Esophagus muscularis mucosa (tissue), 4 donors: ENCODE measurements at regions of chr17 and their contacts with region 1.

Region 1: GRCh38 chr17:6473128-6473767 is 29.0 kb downstream of the PIMREG start:
- DNase-seq: no peak
- H3K4me3 ChIP-seq: no peak overlapping the region
- H3K27ac ChIP-seq: peak overlapping the region in 1 of 4 donors; percentile 24
- H3K4me1 ChIP-seq: peaks cover 0 to 40% (median 29%) of the 10 kb centered on the region in 4 donors
- H3K27me3 ChIP-seq: no peaks in the 10 kb centered on the region
- CTCF ChIP-seq: peak; percentile 91 to 99 (median 95)
- EP300 ChIP-seq: no peak
- POLR2A ChIP-seq: no peak

Region 2: GRCh38 chr17:6427279-6427781 is 45.9 kb before region 1 on chr17:
- intact Hi-C with region 1: no loop called
- DNase-seq: no peak
- H3K4me3 ChIP-seq: no peak overlapping the region
- H3K27ac ChIP-seq: no peak overlapping the region
- H3K4me1 ChIP-seq: no peaks in the 10 kb centered on the region
- H3K27me3 ChIP-seq: peaks cover 0 to 37% (median 0%) of the 10 kb centered on the region in 4 donors
- CTCF ChIP-seq: no peak
- EP300 ChIP-seq: no peak
- POLR2A ChIP-seq: no peak

Region 3: DNA sequence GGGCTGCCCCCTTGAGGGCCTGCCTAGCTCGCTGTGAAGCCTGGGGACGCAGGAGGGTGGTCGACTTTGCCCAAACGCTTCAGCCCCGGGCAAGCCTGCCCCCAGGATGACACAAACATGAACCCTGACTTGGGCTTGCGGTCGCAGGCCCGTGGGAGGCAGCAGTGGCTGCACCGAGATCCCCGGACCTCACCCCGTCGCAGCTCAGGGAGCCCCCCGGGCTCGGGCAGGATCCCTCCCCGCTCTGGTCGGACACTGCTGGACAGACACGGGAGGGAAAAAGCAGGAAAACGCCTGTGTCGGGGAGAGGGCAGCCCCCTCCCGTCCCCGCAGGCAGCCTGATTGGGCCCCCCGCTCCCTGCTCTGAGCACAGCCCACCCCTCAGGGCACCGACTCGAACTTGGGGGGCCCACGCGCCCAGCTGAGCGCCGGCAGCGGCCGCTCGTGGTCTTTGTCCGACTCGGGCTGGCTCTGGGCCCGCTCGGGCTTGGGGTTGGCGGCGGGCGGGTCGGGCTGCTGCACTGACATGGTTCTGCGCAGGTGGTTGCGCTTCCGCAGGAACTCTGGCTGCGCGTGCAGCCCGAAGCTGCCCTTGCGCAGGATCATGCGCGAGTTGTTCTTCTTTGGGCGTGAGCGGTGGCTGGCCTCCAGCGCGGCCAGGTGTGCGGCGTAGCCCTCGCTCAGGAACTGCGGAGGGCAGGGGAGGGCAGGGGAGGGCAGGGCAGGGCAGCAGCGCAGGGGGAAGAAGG is 18.1 kb before region 1 on chr17:
- intact Hi-C with region 1: no loop called
- DNase-seq: no peak
- H3K4me3 ChIP-seq: peak overlapping the region in 3 of 4 donors; percentile 24 to 32 (median 30)
- H3K27ac ChIP-seq: no peak overlapping the region
- H3K4me1 ChIP-seq: peaks cover 13 to 41% (median 26%) of the 10 kb centered on the region in 4 donors
- H3K27me3 ChIP-seq: peaks cover 0 to 5% (median 0%) of the 10 kb centered on the region in 4 donors
- CTCF ChIP-seq: no peak
- EP300 ChIP-seq: no peak
- POLR2A ChIP-seq: no peak

Region 4: GRCh38 chr17:6555331-6556120 is 82.3 kb after region 1 on chr17:
- intact Hi-C with region 1: loop called (anchors 5 kb)
- DNase-seq: no peak
- H3K4me3 ChIP-seq: peak overlapping the region; percentile 65 to 87 (median 77)
- H3K27ac ChIP-seq: peak overlapping the region; percentile 88 to 92 (median 90)
- H3K4me1 ChIP-seq: peaks cover 11 to 73% (median 62%) of the 10 kb centered on the region in 4 donors
- H3K27me3 ChIP-seq: peaks cover 0 to 11% (median 0%) of the 10 kb centered on the region in 4 donors
- CTCF ChIP-seq: no peak
- EP300 ChIP-seq: no peak
- POLR2A ChIP-seq: no peak

Region 5: DNA sequence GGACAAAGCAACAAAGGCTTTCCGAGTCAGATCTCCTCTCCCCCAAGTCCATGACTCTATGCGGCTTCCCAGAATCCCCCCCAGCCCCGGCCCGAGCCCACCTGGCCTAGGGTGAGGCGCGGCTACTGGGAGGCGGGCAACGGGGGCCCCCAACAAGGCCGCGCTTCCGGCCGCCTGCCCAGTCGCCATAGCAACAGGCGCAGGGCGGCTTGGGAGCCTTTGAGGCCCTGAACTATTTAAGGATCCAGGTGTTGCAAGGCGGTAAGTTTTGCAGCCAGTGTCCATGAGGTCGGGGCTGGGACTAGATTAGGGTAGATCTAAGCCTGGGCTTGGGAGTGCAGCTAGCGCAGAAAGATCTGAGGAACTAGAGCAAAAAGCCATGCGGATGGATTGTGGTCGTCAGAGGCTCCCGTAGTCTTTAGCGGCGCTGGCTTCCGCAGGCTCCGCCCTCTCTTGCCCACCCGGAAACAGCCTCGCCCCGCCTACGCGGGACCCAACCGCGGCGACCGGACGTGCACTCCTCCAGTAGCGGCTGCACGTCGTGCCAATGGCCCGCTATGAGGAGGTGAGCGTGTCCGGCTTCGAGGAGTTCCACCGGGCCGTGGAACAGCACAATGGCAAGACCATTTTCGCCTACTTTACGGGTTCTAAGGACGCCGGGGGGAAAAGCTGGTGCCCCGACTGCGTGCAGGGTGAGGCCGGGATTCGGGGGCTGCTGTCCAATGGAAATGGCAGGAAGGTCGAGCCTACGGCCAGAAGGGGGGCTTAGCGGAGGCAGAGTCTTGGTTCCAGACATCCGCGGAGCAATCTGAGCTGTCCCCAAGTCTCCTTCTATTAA is 167.5 kb after region 1 on chr17 and contains the starts of genes KIAA0753 and TXNDC17:
- intact Hi-C with region 1: loop called (anchors 5 kb)
- DNase-seq: peak; percentile 98
- H3K4me3 ChIP-seq: peak within 1 kb of the TSS; percentile 83 to 90 (median 86)
- H3K27ac ChIP-seq: peak within 1 kb of the TSS; percentile 78 to 87 (median 81)
- H3K4me1 ChIP-seq: peaks cover 18 to 50% (median 34%) of the 10 kb centered on the region in 4 donors
- H3K27me3 ChIP-seq: no peaks in the 10 kb centered on the region
- CTCF ChIP-seq: peak in 1 of 3 experiments; percentile 19
- EP300 ChIP-seq: no peak
- POLR2A ChIP-seq: peak; percentile 73
- total RNA-seq, gene KIAA0753: 36.9 to 73.9 (median 46.4) TPM
- total RNA-seq, gene TXNDC17: 58.5 to 109 (median 74.2) TPM

Region 6: GRCh38 chr17:6666077-6666521 is 192.9 kb after region 1 on chr17:
- intact Hi-C with region 1: no loop called
- DNase-seq: no peak
- H3K4me3 ChIP-seq: no peak overlapping the region
- H3K27ac ChIP-seq: no peak overlapping the region
- H3K4me1 ChIP-seq: peaks cover 0 to 3% (median 0%) of the 10 kb centered on the region in 4 donors
- H3K27me3 ChIP-seq: peaks cover 0 to 48% (median 0%) of the 10 kb centered on the region in 4 donors
- CTCF ChIP-seq: peak; percentile 82 to 92 (median 88)
- EP300 ChIP-seq: no peak
- POLR2A ChIP-seq: no peak